ENCODE measurements at regions of chr3 and their contacts with region 1.

Region 1: DNA sequence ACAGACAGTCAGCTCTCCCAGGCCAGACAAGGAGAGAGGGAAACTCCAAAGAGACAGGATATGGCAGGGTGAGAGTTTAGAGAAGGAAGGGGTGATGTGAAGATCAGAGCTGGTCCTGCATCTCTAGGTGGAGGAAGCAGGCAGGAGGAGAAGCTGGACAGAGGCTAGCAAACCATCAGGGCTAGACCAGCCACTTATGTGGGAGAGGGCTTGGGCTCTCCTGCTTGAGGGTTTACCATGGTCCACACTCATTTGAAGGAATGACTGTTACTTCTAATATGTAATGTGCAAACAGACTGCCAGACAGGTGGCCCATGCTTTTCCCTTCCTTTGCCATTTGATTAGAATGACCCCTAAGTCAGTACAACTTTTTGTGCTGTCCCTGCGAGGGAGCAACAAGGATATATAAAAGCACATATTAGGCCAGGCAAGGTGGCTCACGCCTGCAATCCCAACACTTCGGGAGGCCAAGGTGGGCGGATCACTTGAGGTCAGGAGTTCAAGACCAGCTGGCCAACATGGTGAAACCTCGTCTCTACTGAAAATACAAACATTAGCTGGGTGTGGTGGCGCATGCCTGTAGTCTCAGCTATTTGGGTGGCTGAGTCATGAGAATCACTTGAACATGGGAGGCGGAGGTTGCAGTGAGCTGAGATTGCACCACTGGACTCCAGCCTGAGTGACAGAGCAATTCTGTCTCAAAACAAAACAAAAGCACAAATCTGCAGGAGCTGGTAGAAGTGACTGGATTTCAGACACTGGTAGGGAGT is 41.0 kb upstream of the MANF start:
- DNase-seq: no peak
- ATAC-seq: no peak
- H3K4me3 ChIP-seq: no peak overlapping the region
- H3K4me3 Mint-ChIP-seq: no peak overlapping the region
- H3K27ac ChIP-seq: no peak overlapping the region
- H3K27ac Mint-ChIP-seq: no peak overlapping the region
- H3K4me1 ChIP-seq: no peaks in the 10 kb centered on the region
- H3K4me1 Mint-ChIP-seq: no peaks in the 10 kb centered on the region
- H3K27me3 ChIP-seq: no peaks in the 10 kb centered on the region
- H3K27me3 Mint-ChIP-seq: peaks cover 0 to 1% of the 10 kb centered on the region in 2 donors

Region 2: DNA sequence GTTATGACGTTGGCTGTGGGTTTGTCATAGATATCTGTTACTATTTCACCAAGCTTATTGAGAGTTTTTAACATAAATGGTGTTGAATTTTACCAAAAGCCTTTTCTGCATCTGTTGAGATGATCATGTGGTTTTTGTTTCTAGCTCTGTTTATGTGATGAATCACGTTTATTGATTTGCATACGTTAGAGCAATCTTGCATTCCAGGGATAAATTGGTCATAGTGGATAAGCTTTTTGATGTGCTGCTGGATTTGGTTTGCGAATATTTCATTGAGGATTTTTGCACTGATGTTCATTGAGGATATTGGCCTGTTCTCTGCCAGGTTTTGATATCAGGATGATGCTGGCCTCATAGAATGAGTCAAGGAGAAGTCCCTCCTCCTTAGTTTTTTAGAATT is 551.5 kb before region 1 on chr3:
- CTCF ChIA-PET with region 1: no interaction called
- POLR2A ChIA-PET with region 1: interaction called in 1 of 2 experiments, 12 read pairs
- DNase-seq: no peak
- ATAC-seq: no peak
- H3K4me3 ChIP-seq: no peak overlapping the region
- H3K4me3 Mint-ChIP-seq: no peak overlapping the region
- H3K27ac ChIP-seq: no peak overlapping the region
- H3K27ac Mint-ChIP-seq: no peak overlapping the region
- H3K4me1 ChIP-seq: no peaks in the 10 kb centered on the region
- H3K4me1 Mint-ChIP-seq: no peaks in the 10 kb centered on the region
- H3K27me3 ChIP-seq: peaks cover 0 to 6% of the 10 kb centered on the region in 2 experiments
- H3K27me3 Mint-ChIP-seq: peaks cover 7 to 17% of the 10 kb centered on the region in 2 donors

Measured in T-cell (primary cell).